Transverse colon (tissue), 4 donors: ENCODE measurements at regions of chr16 and their contacts with region 1.

Region 1: DNA sequence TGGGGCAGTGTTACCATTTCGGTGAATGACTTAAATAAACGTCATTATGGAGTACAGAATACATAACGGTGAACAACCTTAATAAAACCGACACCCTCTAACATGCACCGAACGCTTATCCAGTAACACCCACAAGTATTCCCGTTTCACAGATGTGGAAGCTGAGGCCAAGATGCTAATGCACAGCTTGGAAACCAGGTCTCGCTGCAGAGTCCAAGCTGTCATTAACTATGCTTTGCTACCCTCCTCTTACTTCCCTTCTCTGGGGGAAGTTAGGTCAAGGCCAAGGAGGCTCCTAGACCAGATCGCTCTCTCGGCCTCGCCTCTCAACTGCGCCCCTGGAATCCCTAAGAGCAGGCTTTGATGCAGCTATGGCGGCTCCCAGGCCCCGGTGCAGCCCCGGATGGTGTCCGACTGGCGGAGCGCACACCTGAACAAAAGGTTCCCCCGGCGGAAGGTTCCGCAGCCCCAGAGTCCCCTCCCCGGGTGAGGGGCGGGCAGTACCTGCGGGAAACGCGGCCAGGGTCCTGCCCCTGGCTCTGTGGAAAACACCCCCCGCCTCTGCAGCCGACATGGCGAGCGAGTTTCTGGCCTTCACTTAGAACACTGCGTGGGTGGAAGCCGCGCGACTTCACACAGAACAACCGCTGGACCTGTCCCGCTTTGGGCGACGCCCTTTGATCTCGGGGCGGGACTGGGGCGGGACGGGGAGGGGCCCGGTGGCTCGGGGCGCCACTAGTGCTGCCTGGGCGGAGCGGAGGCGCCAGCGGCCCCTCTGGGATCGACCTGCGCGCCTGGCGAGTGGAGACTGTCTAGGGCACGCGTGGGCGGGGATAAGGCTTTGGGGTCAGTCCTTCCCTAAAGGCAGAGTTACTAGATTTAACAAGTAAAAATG is at the start of gene CPPED1:
- DNase-seq: peak; percentile 94
- H3K4me3 ChIP-seq: peak within 1 kb of the TSS; percentile 52 to 84 (median 56)
- H3K27ac ChIP-seq: peak within 1 kb of the TSS; percentile 84 to 93 (median 89)
- H3K4me1 ChIP-seq: peaks cover 0 to 29% (median 20%) of the 10 kb centered on the region in 4 donors
- H3K27me3 ChIP-seq: no peaks in the 10 kb centered on the region
- CTCF ChIP-seq: no peak
- EP300 ChIP-seq: no peak
- POLR2A ChIP-seq: peak; percentile 60
- total RNA-seq, gene CPPED1: 4.1 to 17.3 (median 12.7) TPM

Region 2: DNA sequence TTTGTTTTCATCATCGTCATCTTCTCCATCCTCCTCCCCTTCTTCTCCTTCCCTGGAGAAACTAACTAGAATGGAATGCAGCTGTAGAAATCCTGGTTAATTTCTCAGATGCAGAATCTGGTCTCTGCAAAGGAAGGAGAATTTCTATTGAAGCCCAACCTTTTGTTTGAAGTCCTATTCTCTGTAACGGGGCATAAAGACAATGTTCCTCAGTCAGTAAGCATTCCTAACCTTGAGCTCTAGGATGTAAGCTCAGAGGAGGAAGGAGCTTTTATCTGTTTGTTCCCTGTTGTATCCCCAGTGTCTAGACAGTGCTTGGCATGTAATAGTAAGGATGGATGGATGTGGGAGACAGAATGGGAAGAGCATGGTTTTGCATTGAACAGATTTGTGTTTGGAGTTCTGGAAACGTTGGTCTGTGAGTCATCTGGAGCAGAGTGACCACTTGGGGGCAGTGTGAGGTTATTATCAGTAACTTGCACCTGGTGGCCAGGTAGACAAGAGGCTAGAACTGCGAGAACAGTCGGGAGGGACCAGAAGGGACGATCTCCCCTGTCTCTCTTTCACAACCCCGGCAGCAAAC is 463.2 kb before region 1 on chr16:
- in situ Hi-C with region 1: loop called in 1 of 4 experiments (anchors 25 kb)
- intact Hi-C with region 1: no loop called
- DNase-seq: peak; percentile 46
- H3K4me3 ChIP-seq: no peak overlapping the region
- H3K27ac ChIP-seq: no peak overlapping the region
- H3K4me1 ChIP-seq: no peaks in the 10 kb centered on the region
- H3K27me3 ChIP-seq: no peaks in the 10 kb centered on the region
- CTCF ChIP-seq: peak; percentile 29 to 59 (median 48)
- EP300 ChIP-seq: no peak
- POLR2A ChIP-seq: no peak